ENCODE measurements at regions of chr11 and their contacts with region 1.

Region 1: GRCh38 chr11:114340311-114341131 is 44.3 kb downstream of the NNMT start:
- DNase-seq: peak; percentile 43
- ATAC-seq: peak; percentile 94
- H3K4me3 ChIP-seq: peak overlapping the region in 1 of 2 experiments; percentile 21; a peak in 1 of 4 replicates
- H3K27ac ChIP-seq: no peak overlapping the region
- H3K4me1 ChIP-seq: no peaks in the 10 kb centered on the region
- H3K27me3 ChIP-seq: peaks cover 2% of the 10 kb centered on the region; the same call in 1 of the 2 replicates
- CTCF ChIP-seq: peak; percentile 95

Region 2: DNA sequence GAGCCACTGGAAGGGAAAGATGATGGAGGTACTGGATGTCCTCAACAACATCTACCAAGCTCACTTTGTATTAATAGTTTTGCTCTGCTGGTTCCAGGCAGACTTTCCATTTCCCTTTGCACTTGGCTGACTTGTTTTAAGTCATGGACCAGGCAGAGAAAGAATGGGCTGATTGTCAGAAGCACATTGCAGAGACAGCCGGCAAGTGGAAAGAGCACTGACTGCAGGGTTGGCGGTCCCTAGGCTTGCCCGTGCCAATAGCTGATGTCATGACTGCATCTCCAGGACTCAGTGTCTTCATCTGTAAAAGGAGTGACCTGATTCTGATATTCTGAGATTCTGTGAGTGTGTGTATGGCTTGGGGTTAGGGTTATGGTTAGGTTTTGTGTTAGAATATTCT is 65.2 kb before region 1 on chr11:
- CTCF ChIA-PET with region 1: no interaction called
- POLR2A ChIA-PET with region 1: no interaction called
- in situ Hi-C with region 1: no loop called
- intact Hi-C with region 1: no loop called
- DNase-seq: no peak
- ATAC-seq: no peak
- H3K4me3 ChIP-seq: no peak overlapping the region
- H3K27ac ChIP-seq: no peak overlapping the region
- H3K4me1 ChIP-seq: no peaks in the 10 kb centered on the region
- H3K27me3 ChIP-seq: peaks cover 26% of the 10 kb centered on the region; the same call in 1 of the 2 replicates
- CTCF ChIP-seq: no peak

Region 3: DNA sequence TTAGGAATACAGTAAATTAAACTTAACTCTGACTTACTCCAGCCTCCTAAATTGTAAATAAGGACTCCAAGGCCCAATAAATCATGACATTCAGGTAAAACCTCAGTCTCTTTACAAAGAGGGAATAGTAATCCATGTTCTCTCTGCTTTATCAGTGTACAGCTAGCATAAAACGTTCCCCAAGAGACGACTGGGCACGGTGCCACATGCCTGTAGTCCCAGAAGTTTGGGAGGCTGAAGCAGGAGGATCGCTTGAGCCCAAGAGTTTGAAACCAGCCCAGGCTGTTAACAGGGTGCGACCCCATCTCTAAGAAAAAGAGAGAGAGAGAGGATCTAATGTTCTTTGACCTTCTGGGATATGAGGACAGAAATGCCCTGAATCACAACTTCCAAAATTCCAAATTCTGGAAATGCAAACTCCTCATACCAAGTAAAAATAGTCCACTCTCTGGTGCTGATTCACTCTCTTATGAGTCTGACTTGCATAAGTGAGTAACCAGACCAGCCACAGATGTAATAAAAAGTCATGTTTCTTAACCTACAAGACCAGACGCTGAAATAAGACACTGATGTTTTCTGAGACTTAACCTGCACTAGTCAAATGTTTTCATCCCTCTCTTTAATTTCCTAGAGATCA is 18.8 kb before region 1 on chr11:
- CTCF ChIA-PET with region 1: no interaction called
- POLR2A ChIA-PET with region 1: no interaction called
- in situ Hi-C with region 1: no loop called
- intact Hi-C with region 1: no loop called
- DNase-seq: no peak
- ATAC-seq: no peak
- H3K4me3 ChIP-seq: no peak overlapping the region
- H3K27ac ChIP-seq: no peak overlapping the region
- H3K4me1 ChIP-seq: no peaks in the 10 kb centered on the region
- H3K27me3 ChIP-seq: peaks cover 5% of the 10 kb centered on the region
- CTCF ChIP-seq: no peak

Region 4: GRCh38 chr11:114439229-114440120 is 99.0 kb after region 1 on chr11 and contains the start of gene REXO2:
- CTCF ChIA-PET with region 1: no interaction called
- POLR2A ChIA-PET with region 1: no interaction called
- in situ Hi-C with region 1: no loop called
- intact Hi-C with region 1: loop called (anchors 10 kb)
- DNase-seq: peak; percentile 80
- ATAC-seq: peak; percentile 99
- H3K4me3 ChIP-seq: peak within 1 kb of the TSS; percentile 86 to 91
- H3K27ac ChIP-seq: peak within 1 kb of the TSS; percentile 88
- H3K4me1 ChIP-seq: peaks cover 20% of the 10 kb centered on the region
- H3K27me3 ChIP-seq: no peaks in the 10 kb centered on the region
- CTCF ChIP-seq: peak; percentile 21; the same call in 1 of the 2 replicates
- total RNA-seq, gene REXO2: 111 TPM

Region 5: DNA sequence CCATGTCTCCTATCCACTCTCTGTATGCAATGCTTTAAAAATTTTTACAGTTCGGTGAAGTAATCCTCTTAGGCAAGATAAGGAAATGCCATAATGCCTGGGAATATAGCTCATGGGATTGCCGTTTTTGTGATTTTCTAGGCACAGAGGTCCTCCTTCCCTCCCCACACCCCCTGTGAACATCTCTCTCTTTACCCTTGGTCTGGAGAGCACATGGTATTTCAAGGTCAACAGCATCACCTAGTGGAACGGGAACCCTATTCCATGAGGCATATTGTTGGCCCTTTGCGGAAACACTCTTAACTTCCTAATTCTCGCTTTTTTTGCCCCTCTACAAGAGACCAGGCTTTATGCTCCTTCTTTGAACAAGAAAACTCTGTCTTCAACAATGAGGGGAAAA is 246.3 kb after region 1 on chr11:
- CTCF ChIA-PET with region 1: no interaction called
- POLR2A ChIA-PET with region 1: no interaction called
- in situ Hi-C with region 1: no loop called
- intact Hi-C with region 1: loop called (anchors 10 kb)
- DNase-seq: no peak
- ATAC-seq: no peak
- H3K4me3 ChIP-seq: no peak overlapping the region
- H3K27ac ChIP-seq: no peak overlapping the region
- H3K4me1 ChIP-seq: no peaks in the 10 kb centered on the region
- H3K27me3 ChIP-seq: no peaks in the 10 kb centered on the region
- CTCF ChIP-seq: peak; percentile 47

Region 6: DNA sequence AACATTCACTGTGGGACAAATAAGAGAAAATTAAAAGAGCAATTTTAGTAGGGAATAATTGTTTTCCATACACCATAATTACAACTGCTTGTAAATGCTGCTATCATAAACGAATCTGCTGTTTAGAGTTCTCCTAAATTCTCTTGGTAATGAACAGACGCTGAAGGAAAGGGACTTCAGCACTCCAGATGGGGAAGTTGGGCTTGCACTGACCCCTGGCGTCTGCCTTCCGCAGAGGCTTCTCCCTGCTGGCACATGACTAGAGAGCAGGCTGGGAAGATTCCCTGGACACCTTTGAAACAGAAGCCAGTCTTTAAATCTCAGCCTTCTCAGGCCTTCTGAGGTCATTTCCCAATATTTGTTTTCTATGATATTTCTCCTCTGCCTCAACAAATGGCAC is 421.9 kb after region 1 on chr11:
- CTCF ChIA-PET with region 1: interaction called, 3 read pairs
- POLR2A ChIA-PET with region 1: no interaction called
- in situ Hi-C with region 1: no loop called
- intact Hi-C with region 1: loop called (anchors 2 kb)
- DNase-seq: no peak
- ATAC-seq: peak; percentile 85
- H3K4me3 ChIP-seq: no peak overlapping the region
- H3K27ac ChIP-seq: no peak overlapping the region
- H3K4me1 ChIP-seq: no peaks in the 10 kb centered on the region
- H3K27me3 ChIP-seq: no peaks in the 10 kb centered on the region
- CTCF ChIP-seq: peak; percentile 79

Measured in Panc1 (cell line).